ENCODE measurements at regions of chr1 and their contacts with region 1.

Region 1: DNA sequence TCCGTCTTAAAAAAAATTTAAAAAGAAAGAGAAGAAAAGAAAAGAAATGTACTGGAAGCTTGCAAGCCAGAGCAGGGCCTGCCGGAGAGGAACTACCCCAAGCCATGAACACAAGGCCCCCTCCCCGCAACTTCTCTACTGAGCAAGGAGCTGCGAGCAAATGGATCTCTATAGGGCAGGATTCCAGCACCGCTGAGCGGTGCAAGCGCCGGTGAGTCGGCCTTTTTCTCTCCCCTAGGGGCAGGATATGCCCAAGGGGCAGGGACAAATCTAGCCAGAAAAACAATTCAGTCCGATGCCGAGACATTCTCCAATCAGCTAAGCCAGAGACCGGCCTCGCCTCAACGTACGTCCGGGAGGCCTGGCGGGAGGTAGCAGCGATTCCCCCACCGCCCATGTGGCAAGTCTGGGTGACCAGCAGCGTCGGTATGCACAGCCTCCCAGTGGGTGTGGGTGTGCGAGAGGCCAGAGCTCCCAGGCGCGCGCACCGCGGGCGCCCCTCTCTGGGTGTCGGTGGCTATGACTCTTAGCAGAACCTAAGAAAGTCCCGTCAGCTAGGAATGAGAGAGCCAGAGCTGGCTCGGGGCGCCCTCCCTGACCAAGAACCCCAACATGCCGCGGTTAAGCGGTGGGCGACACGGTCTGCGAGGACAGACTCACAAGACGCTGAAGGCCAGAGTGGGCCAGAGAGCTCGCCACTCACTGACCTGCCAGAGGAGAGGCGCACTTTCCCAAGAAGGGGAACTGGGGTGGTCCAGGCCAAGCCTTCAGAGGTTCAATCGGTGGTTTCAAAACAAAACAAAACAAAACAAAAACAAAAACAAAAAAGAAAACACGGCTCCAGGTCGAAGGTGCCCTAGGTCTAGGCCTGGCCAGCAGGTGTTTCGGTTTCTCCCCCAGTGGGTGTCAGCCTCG is 1.9 kb downstream of the CSMD2 start:
- DNase-seq: peak; percentile 66 to 91 (median 78)
- ATAC-seq: peak; percentile 94 to 97 (median 96)
- H3K4me3 ChIP-seq: peak overlapping the region; percentile 0 to 50 (median 24)
- H3K27ac ChIP-seq: no peak overlapping the region
- H3K4me1 ChIP-seq: peaks cover 0 to 7% (median 3%) of the 10 kb centered on the region in 3 donors
- H3K27me3 ChIP-seq: peaks cover 0 to 11% (median 2%) of the 10 kb centered on the region in 4 donors
- CTCF ChIP-seq: peak; percentile 18 to 73 (median 56)

Region 2: GRCh38 chr1:33633019-33633801 is 529.9 kb before region 1 on chr1:
- intact Hi-C with region 1: loop called in 1 of 3 experiments (anchors 10 kb)
- DNase-seq: peak; percentile 84 to 96 (median 93)
- ATAC-seq: peak; percentile 88 to 98 (median 97)
- H3K4me3 ChIP-seq: no peak overlapping the region
- H3K27ac ChIP-seq: no peak overlapping the region
- H3K4me1 ChIP-seq: no peaks in the 10 kb centered on the region
- H3K27me3 ChIP-seq: no peaks in the 10 kb centered on the region
- CTCF ChIP-seq: peak; percentile 90 to 98 (median 93)